ENCODE measurements at regions of chr2 and their contacts with region 1.

Region 1: DNA sequence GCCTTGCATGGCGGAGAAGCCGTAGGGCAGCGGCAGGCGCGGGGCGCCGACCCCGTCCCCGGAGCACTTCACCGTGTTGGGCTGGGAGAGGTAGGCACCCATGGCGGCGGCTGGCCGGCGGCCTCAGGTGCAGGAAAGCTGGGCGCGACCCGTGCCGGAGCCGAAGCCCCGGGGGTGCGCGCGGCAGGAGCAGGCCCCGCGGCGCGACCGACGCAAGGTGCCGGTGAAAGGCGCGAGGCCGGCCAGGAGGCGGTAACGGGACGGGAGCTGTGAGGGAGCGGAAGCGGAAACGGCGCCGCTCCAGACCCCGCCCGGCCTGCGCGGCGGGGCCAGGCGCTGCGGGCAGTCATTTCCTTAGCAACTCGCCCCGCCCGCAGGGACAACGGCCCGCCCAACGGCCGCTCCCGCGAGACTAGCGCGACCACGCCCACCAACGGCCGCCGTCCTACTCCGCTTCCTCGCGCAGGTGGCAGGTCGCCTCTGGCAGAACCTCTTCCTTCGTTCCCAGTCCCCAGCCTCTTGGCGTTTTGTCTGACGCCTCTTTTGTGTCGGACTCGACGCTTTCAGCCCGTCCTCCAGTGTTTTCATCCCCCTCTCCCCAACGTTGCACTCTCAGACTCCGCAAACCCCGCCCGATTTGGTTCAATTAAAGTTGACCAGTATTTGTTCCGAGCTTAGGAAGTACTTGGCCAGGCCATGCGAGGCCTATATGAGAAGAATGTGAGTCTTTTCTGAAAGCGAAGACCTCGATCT is at the start of gene PPM1G:
- DNase-seq: peak; percentile 96
- ATAC-seq: peak; percentile 98
- H3K4me3 Mint-ChIP-seq: peak within 1 kb of the TSS; percentile 86
- H3K27ac Mint-ChIP-seq: peak within 1 kb of the TSS; percentile 90
- H3K4me1 Mint-ChIP-seq: peaks cover 36% of the 10 kb centered on the region
- H3K27me3 Mint-ChIP-seq: peaks cover 2% of the 10 kb centered on the region
- CTCF ChIP-seq: no peak
- total RNA-seq, gene PPM1G: 138 to 142 TPM

Region 2: GRCh38 chr2:27421028-27421427 is 11.5 kb after region 1 on chr2:
- CTCF ChIA-PET with region 1: interaction called, 3 read pairs
- POLR2A ChIA-PET with region 1: interaction called, 15 read pairs
- intact Hi-C with region 1: no loop called
- DNase-seq: no peak
- ATAC-seq: no peak
- H3K4me3 Mint-ChIP-seq: no peak overlapping the region
- H3K27ac Mint-ChIP-seq: no peak overlapping the region
- H3K4me1 Mint-ChIP-seq: no peaks in the 10 kb centered on the region
- H3K27me3 Mint-ChIP-seq: no peaks in the 10 kb centered on the region
- CTCF ChIP-seq: no peak

Region 3: GRCh38 chr2:27428213-27428977 is 18.9 kb after region 1 on chr2 and contains the start of gene NRBP1:
- CTCF ChIA-PET with region 1: interaction called, 19 read pairs
- POLR2A ChIA-PET with region 1: interaction called, 37 read pairs
- intact Hi-C with region 1: no loop called
- DNase-seq: peak; percentile 93
- ATAC-seq: peak; percentile 87
- H3K4me3 Mint-ChIP-seq: peak within 1 kb of the TSS; percentile 98
- H3K27ac Mint-ChIP-seq: peak within 1 kb of the TSS; percentile 97
- H3K4me1 Mint-ChIP-seq: peaks cover 21% of the 10 kb centered on the region
- H3K27me3 Mint-ChIP-seq: no peaks in the 10 kb centered on the region
- CTCF ChIP-seq: no peak
- total RNA-seq, gene NRBP1: 60.5 to 62.1 TPM

Region 4: GRCh38 chr2:27471961-27472360 is 62.5 kb after region 1 on chr2:
- CTCF ChIA-PET with region 1: no interaction called
- POLR2A ChIA-PET with region 1: no interaction called
- intact Hi-C with region 1: no loop called
- DNase-seq: no peak
- ATAC-seq: no peak
- H3K4me3 Mint-ChIP-seq: no peak overlapping the region
- H3K27ac Mint-ChIP-seq: no peak overlapping the region
- H3K4me1 Mint-ChIP-seq: no peaks in the 10 kb centered on the region
- H3K27me3 Mint-ChIP-seq: no peaks in the 10 kb centered on the region
- CTCF ChIP-seq: no peak

Measured in activated CD8-positive, alpha-beta T cell treated with anti-CD3 and anti-CD28 coated beads for 36 hours (primary cell).